Activated CD4-positive, alpha-beta memory T cell treated with anti-CD3 and anti-CD28 coated beads for 36 hours (primary cell): ENCODE measurements at regions of chr1 and their contacts with region 1.

Region 1: GRCh38 chr1:180178511-180179161 is 24.0 kb downstream of the QSOX1 start:
- DNase-seq: peak; percentile 74
- H3K4me3 Mint-ChIP-seq: no peak overlapping the region
- H3K27ac Mint-ChIP-seq: no peak overlapping the region
- H3K4me1 Mint-ChIP-seq: no peaks in the 10 kb centered on the region
- H3K27me3 Mint-ChIP-seq: no peaks in the 10 kb centered on the region

Region 2: GRCh38 chr1:179706339-179706941 is 472.2 kb before region 1 on chr1:
- CTCF ChIA-PET with region 1: interaction called, 29 read pairs
- POLR2A ChIA-PET with region 1: no interaction called
- intact Hi-C with region 1: loop called (anchors 2 kb)
- DNase-seq: peak; percentile 73
- H3K4me3 Mint-ChIP-seq: no peak overlapping the region
- H3K27ac Mint-ChIP-seq: no peak overlapping the region
- H3K4me1 Mint-ChIP-seq: peaks cover 19% of the 10 kb centered on the region
- H3K27me3 Mint-ChIP-seq: no peaks in the 10 kb centered on the region

Region 3: GRCh38 chr1:180085331-180085730 is 93.3 kb before region 1 on chr1:
- CTCF ChIA-PET with region 1: interaction called, 16 read pairs
- POLR2A ChIA-PET with region 1: no interaction called
- intact Hi-C with region 1: no loop called
- DNase-seq: no peak
- H3K4me3 Mint-ChIP-seq: no peak overlapping the region
- H3K27ac Mint-ChIP-seq: no peak overlapping the region
- H3K4me1 Mint-ChIP-seq: peaks cover 4% of the 10 kb centered on the region
- H3K27me3 Mint-ChIP-seq: no peaks in the 10 kb centered on the region

Region 4: DNA sequence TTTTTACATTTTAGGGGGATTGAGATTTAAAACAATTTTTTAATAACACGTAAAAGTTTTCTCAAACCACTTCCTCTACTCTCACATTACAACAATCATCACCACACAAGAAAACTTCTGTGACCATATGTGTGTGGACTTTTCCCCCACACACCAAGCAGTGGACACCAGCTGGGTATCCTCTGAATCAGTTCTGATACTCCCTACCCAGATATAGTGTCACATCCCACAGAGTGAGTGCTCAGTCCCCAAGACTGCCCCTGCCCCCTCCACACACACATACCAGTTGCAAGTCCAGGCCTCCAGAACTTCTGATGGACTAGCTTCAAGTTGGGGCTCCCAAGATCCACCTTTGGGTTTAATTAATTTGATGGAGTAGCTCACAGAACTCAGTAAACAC is 77.2 kb before region 1 on chr1:
- CTCF ChIA-PET with region 1: interaction called, 17 read pairs
- POLR2A ChIA-PET with region 1: no interaction called
- intact Hi-C with region 1: no loop called
- DNase-seq: no peak
- H3K4me3 Mint-ChIP-seq: no peak overlapping the region
- H3K27ac Mint-ChIP-seq: no peak overlapping the region
- H3K4me1 Mint-ChIP-seq: no peaks in the 10 kb centered on the region
- H3K27me3 Mint-ChIP-seq: no peaks in the 10 kb centered on the region

Region 5: GRCh38 chr1:180154325-180155181 is 24.1 kb before region 1 on chr1 and contains the start of gene QSOX1:
- CTCF ChIA-PET with region 1: interaction called, 15 read pairs
- POLR2A ChIA-PET with region 1: interaction called, 3 read pairs
- intact Hi-C with region 1: no loop called
- DNase-seq: peak; percentile 93
- H3K4me3 Mint-ChIP-seq: peak within 1 kb of the TSS; percentile 89
- H3K27ac Mint-ChIP-seq: peak within 1 kb of the TSS; percentile 73
- H3K4me1 Mint-ChIP-seq: peaks cover 26% of the 10 kb centered on the region
- H3K27me3 Mint-ChIP-seq: no peaks in the 10 kb centered on the region
- total RNA-seq, gene QSOX1: 40.3 to 42.4 TPM

Region 6: GRCh38 chr1:180213401-180214170 is 35.0 kb after region 1 on chr1:
- CTCF ChIA-PET with region 1: interaction called, 16 read pairs
- POLR2A ChIA-PET with region 1: no interaction called
- intact Hi-C with region 1: no loop called
- DNase-seq: peak; percentile 78
- H3K4me3 Mint-ChIP-seq: peak overlapping the region; percentile 48
- H3K27ac Mint-ChIP-seq: no peak overlapping the region
- H3K4me1 Mint-ChIP-seq: peaks cover 16% of the 10 kb centered on the region
- H3K27me3 Mint-ChIP-seq: peaks cover 5% of the 10 kb centered on the region

Region 7: GRCh38 chr1:180248731-180249681 is 70.4 kb after region 1 on chr1:
- CTCF ChIA-PET with region 1: no interaction called
- POLR2A ChIA-PET with region 1: no interaction called
- intact Hi-C with region 1: no loop called
- DNase-seq: no peak
- H3K4me3 Mint-ChIP-seq: no peak overlapping the region
- H3K27ac Mint-ChIP-seq: no peak overlapping the region
- H3K4me1 Mint-ChIP-seq: no peaks in the 10 kb centered on the region
- H3K27me3 Mint-ChIP-seq: peaks cover 43% of the 10 kb centered on the region